ENCODE measurements at regions of chr17 and their contacts with region 1.

Region 1: DNA sequence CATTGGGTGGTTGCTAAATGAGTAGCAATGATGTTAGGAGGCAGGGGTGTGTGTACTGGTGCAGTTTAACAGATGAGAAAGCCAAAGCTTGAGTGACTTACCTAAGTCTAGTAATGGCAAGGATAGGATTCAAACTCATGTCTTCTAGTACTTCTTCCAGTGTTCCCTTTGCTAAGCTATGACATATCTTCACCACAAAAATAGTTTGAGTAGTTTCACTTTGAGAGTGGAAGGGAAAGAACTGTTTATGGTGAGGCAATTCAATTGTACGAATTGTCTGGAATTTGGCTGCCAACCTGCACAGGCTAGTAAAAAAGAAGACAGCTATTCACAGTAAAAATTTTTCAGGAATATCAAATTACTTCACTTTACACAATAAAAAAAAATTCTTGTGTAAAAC is 138.0 kb downstream of the NLK start:
- DNase-seq: no peak
- H3K4me3 ChIP-seq: no peak overlapping the region
- H3K27ac ChIP-seq: no peak overlapping the region
- H3K4me1 ChIP-seq: no peaks in the 10 kb centered on the region
- H3K27me3 ChIP-seq: no peaks in the 10 kb centered on the region
- CTCF ChIP-seq: no peak

Region 2: DNA sequence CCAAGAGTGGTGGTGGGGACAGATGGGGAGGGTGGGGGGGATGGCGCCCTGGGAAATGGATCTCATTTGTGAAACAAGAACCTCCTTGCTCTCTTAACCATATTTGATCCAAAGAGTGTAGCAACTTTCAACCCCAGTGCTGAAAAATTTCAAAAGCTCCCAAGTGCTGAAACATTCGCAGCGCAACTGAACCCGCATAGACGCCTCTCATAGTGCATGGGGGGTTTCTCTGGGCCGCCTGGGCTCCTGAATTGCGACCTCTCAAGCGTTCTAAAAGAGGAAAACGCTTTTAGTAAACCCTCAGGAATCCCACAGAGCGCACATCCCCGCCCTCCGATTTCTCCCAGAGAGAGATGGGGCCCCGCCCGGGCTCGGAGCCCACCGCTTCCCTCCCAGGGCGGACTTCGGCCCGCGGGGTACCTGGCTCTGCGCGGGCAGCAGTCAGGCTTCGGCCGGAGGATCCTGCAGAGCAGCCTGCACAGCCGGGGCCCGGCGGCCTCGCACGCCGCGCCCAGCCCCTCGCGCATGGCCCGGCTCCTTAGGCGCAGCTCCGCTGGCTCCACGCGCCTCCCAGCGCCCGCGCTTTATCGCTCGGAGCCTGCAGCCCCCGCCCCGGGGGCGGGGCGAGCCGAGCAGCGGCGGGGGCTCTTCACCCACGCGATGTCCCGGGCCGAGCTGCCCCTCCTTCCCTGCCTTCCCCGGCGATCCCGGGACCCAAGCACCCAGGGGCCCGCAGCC is 387.1 kb before region 1 on chr17:
- CTCF ChIA-PET with region 1: no interaction called
- POLR2A ChIA-PET with region 1: no interaction called
- intact Hi-C with region 1: loop called (anchors 10 kb)
- DNase-seq: no peak
- H3K4me3 ChIP-seq: no peak overlapping the region
- H3K27ac ChIP-seq: no peak overlapping the region
- H3K4me1 ChIP-seq: peaks cover 11% of the 10 kb centered on the region
- H3K27me3 ChIP-seq: peaks cover 29% of the 10 kb centered on the region
- CTCF ChIP-seq: no peak

Region 3: GRCh38 chr17:28426081-28426519 is 245.7 kb after region 1 on chr17:
- CTCF ChIA-PET with region 1: no interaction called
- POLR2A ChIA-PET with region 1: no interaction called
- intact Hi-C with region 1: no loop called
- DNase-seq: no peak
- H3K4me3 ChIP-seq: no peak overlapping the region
- H3K27ac ChIP-seq: no peak overlapping the region
- H3K4me1 ChIP-seq: no peaks in the 10 kb centered on the region
- H3K27me3 ChIP-seq: no peaks in the 10 kb centered on the region
- CTCF ChIP-seq: peak; percentile 61

Region 4: GRCh38 chr17:29059281-29059680 is 878.8 kb after region 1 on chr17:
- CTCF ChIA-PET with region 1: no interaction called
- POLR2A ChIA-PET with region 1: no interaction called
- intact Hi-C with region 1: no loop called
- DNase-seq: peak in 1 of 2 experiments; percentile 70
- H3K4me3 ChIP-seq: no peak overlapping the region
- H3K27ac ChIP-seq: no peak overlapping the region
- H3K4me1 ChIP-seq: peaks cover 6% of the 10 kb centered on the region; the same call in 1 of the 2 replicates
- H3K27me3 ChIP-seq: no peaks in the 10 kb centered on the region
- CTCF ChIP-seq: no peak

Measured in PC-9 (cell line).